Left ventricle myocardium superior (tissue), 1 donor: ENCODE measurements at regions of chr12 and their contacts with region 1.

Region 1: GRCh38 chr12:42023733-42024494 is 120.8 kb downstream of the GXYLT1 start:
- DNase-seq: peak; percentile 83
- ATAC-seq: peak; percentile 93

Region 2: GRCh38 chr12:40946612-40947194 is 1077.2 kb before region 1 on chr12:
- intact Hi-C with region 1: loop called (anchors 5 kb)
- DNase-seq: no peak
- ATAC-seq: no peak